Uterus (tissue), 4 donors: ENCODE measurements at regions of chr22 and their contacts with region 1.

Region 1: GRCh38 chr22:30754971-30755756 is 60.5 kb downstream of the OSBP2 start:
- DNase-seq: peak; percentile 26 to 50
- H3K4me3 ChIP-seq: no peak overlapping the region
- H3K27ac ChIP-seq: no peak overlapping the region
- H3K4me1 ChIP-seq: no peaks in the 10 kb centered on the region
- H3K27me3 ChIP-seq: no peaks in the 10 kb centered on the region
- CTCF ChIP-seq: peak; percentile 41 to 76 (median 49)
- POLR2A ChIP-seq: no peak

Region 2: DNA sequence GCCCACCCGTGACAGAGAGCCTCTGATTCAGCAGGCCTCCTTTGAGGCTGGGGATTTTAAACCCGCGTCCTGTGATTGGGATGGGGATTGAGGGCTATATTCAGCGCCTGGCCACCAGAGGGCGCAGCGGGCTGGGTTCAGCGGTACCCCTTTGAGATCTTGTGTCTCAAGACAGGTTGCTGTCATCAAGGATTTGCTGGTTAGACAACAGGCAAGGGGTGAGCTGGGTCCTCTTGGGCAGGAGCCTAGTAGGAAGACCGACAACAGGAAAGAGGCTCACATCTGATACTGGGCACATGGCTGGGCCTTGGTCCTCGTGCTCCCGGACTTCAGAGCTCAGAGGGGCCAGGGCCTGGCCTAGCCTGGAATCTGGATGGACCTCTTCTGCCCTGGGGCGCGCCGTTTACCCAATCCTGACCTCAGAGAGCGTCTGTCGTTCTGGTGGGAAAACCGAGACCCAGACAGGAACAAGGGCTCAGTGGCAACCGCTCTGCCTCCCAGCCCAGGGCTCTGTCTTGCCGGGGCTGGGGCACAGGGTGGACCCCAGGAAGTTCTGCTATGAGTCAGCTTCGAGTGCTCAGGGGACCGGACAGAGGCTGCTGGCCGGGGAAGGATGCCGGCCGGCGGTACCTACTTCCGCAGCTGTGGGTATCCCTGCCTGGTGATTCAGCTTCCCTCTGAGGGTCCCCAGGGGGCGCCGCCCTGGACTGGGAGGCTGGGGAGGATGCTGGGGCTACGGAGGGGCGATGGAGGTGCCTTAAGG is 120.5 kb before region 1 on chr22:
- intact Hi-C with region 1: loop called (anchors 5 kb)
- DNase-seq: peak; percentile 88 to 91
- H3K4me3 ChIP-seq: peak overlapping the region; percentile 44 to 71
- H3K27ac ChIP-seq: peak overlapping the region; percentile 97 to 99
- H3K4me1 ChIP-seq: peaks cover 0 to 19% of the 10 kb centered on the region in 2 donors
- H3K27me3 ChIP-seq: no peaks in the 10 kb centered on the region
- CTCF ChIP-seq: peak; percentile 96 to 97 (median 97)
- POLR2A ChIP-seq: no peak

Region 3: DNA sequence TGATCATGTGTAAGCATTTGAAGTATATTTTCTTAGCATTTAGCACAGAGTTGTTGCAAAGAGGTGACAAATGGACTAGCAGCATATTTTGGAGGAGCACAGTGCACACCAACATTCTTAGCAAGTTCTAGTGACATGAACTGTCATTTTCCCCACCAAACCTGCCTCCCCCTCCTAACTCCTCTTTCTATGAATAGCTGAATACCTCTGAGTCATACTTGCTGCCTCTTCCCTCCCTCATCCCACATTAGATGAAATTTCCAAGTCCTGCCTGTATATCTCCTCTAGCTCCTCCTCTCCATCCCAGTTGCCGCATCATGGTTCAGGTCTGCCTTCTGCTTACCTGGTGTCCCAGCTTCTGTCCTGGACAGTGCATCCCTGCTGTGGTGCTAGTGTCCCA is 53.3 kb before region 1 on chr22:
- intact Hi-C with region 1: no loop called
- DNase-seq: no peak
- H3K4me3 ChIP-seq: no peak overlapping the region
- H3K27ac ChIP-seq: no peak overlapping the region
- H3K4me1 ChIP-seq: no peaks in the 10 kb centered on the region
- H3K27me3 ChIP-seq: no peaks in the 10 kb centered on the region
- CTCF ChIP-seq: no peak
- POLR2A ChIP-seq: no peak